ENCODE measurements at regions of chr16 and their contacts with region 1.

Region 1: DNA sequence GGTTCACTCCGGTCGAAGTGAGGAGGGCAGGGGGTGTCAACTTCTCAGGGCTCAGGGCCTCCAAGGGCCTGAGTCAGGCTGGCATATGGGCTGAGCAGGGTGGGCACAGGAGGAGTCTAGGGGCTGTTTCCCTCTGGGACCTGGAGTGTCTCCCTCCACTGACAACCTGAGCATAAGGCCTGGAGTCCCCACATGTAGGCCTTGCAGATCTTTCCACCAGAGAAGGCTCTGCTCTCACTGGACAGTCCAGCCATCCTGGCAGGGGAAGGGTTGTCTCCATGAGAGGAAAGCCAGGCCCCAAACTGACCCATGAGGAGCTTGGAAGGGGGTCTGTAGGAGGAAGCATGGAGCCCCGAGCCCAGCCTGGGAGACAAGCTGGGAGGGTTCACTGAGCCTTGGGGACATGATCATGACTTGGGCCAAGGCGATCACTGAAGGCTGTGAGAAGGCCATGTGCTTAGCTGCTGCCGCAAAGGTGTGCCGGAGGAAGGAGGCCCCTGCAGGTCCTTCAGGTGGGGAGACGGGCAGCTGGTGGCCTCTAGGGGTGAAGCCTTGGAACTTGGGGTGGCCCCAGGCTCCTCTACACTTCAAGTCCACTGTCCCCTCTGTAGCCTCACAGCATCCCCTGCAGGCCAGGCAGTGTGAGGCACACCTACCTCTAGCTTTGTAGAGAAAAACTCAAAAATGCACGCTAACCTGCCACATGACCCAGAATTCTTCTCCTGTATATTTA is 9.9 kb downstream of the CMTM2 start:
- DNase-seq: peak; percentile 84
- H3K4me3 Mint-ChIP-seq: peak overlapping the region; percentile 64
- H3K27ac Mint-ChIP-seq: peak overlapping the region; percentile 39
- H3K4me1 Mint-ChIP-seq: peaks cover 23% of the 10 kb centered on the region
- H3K27me3 Mint-ChIP-seq: no peaks in the 10 kb centered on the region

Region 2: GRCh38 chr16:66474750-66475199 is 114.4 kb before region 1 on chr16:
- CTCF ChIA-PET with region 1: interaction called, 24 read pairs
- POLR2A ChIA-PET with region 1: no interaction called
- intact Hi-C with region 1: loop called (anchors 1 kb)
- DNase-seq: peak; percentile 77
- H3K4me3 Mint-ChIP-seq: no peak overlapping the region
- H3K27ac Mint-ChIP-seq: peak overlapping the region; percentile 63
- H3K4me1 Mint-ChIP-seq: peaks cover 22% of the 10 kb centered on the region
- H3K27me3 Mint-ChIP-seq: no peaks in the 10 kb centered on the region

Region 3: GRCh38 chr16:66483689-66484481 is 105.3 kb before region 1 on chr16:
- CTCF ChIA-PET with region 1: interaction called, 20 read pairs
- POLR2A ChIA-PET with region 1: no interaction called
- intact Hi-C with region 1: loop called (anchors 1 kb)
- DNase-seq: peak; percentile 85
- H3K4me3 Mint-ChIP-seq: no peak overlapping the region
- H3K27ac Mint-ChIP-seq: peak overlapping the region; percentile 79
- H3K4me1 Mint-ChIP-seq: peaks cover 19% of the 10 kb centered on the region
- H3K27me3 Mint-ChIP-seq: no peaks in the 10 kb centered on the region

Region 4: GRCh38 chr16:66511615-66512500 is 77.3 kb before region 1 on chr16:
- CTCF ChIA-PET with region 1: interaction called, 15 read pairs
- POLR2A ChIA-PET with region 1: no interaction called
- intact Hi-C with region 1: loop called (anchors 2 kb)
- DNase-seq: no peak
- H3K4me3 Mint-ChIP-seq: no peak overlapping the region
- H3K27ac Mint-ChIP-seq: no peak overlapping the region
- H3K4me1 Mint-ChIP-seq: peaks cover 28% of the 10 kb centered on the region
- H3K27me3 Mint-ChIP-seq: no peaks in the 10 kb centered on the region

Region 5: GRCh38 chr16:66516808-66517585 is 72.2 kb before region 1 on chr16:
- CTCF ChIA-PET with region 1: interaction called, 15 read pairs
- POLR2A ChIA-PET with region 1: no interaction called
- intact Hi-C with region 1: loop called (anchors 2 kb)
- DNase-seq: peak; percentile 95
- H3K4me3 Mint-ChIP-seq: peak overlapping the region; percentile 87
- H3K27ac Mint-ChIP-seq: peak overlapping the region; percentile 99
- H3K4me1 Mint-ChIP-seq: peaks cover 71% of the 10 kb centered on the region
- H3K27me3 Mint-ChIP-seq: no peaks in the 10 kb centered on the region

Region 6: DNA sequence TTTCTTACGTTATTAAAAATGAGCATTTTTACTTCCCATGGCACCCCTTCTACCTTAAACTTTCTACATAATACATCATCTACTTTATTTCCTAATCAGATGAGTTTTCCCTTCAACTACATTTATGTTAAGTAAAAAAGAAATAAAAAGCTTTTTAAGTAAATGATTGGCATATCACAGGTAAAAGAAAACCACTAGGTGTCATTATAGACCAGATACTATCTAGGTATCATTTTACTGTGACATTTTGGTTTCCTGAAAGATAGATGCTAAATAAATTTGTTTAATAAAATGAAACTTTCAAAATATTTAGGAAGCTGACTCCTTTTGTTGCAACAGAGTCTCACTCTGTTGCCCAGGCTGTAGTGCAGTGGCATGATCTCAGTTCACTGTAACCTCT is 26.7 kb before region 1 on chr16:
- CTCF ChIA-PET with region 1: interaction called, 16 read pairs
- POLR2A ChIA-PET with region 1: no interaction called
- intact Hi-C with region 1: loop called (anchors 1 kb)
- DNase-seq: no peak
- H3K4me3 Mint-ChIP-seq: no peak overlapping the region
- H3K27ac Mint-ChIP-seq: no peak overlapping the region
- H3K4me1 Mint-ChIP-seq: peaks cover 71% of the 10 kb centered on the region
- H3K27me3 Mint-ChIP-seq: no peaks in the 10 kb centered on the region

Region 7: DNA sequence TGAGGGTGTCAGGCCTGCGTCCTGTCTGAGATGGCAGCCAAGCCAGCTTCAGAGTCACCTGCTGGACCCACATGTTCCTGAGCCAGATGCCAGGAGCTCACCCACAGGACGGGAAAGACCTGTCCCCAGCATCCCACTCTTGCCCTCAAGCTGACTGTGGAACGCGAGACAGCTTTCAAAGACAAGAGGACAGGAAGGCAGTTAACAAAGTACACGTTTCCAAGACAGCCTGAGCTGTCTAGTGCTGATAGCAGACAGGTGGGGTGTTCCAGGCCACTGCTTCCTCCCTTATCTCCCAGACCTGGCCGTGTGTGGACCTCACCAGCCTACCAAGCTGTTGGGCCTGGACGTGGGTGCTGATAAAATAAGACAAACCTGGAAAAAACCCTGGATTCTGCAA is 28.6 kb after region 1 on chr16:
- CTCF ChIA-PET with region 1: no interaction called
- POLR2A ChIA-PET with region 1: no interaction called
- intact Hi-C with region 1: no loop called
- DNase-seq: no peak
- H3K4me3 Mint-ChIP-seq: no peak overlapping the region
- H3K27ac Mint-ChIP-seq: no peak overlapping the region
- H3K4me1 Mint-ChIP-seq: peaks cover 2% of the 10 kb centered on the region
- H3K27me3 Mint-ChIP-seq: no peaks in the 10 kb centered on the region

Region 8: DNA sequence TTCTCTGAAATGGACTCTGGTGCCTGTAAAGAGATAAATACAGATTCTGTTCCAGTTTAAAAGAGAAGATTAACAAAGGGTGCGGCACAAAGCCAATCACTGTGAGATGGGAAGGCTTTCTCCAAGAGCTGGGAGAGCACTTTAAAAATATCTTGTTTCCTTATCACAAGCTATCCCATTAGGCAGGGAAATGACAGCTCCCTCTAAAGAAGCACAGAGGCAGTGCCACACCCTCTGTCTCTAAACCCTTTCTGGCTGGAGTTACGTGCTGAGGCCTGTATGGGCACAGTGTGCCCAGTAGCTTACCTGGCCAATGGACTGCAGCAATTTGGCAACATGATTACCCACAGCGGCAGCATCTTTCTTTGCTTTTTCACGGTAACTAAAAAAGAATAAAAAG is 221.2 kb after region 1 on chr16:
- CTCF ChIA-PET with region 1: no interaction called
- POLR2A ChIA-PET with region 1: no interaction called
- intact Hi-C with region 1: no loop called
- DNase-seq: no peak
- H3K4me3 Mint-ChIP-seq: no peak overlapping the region
- H3K27ac Mint-ChIP-seq: no peak overlapping the region
- H3K4me1 Mint-ChIP-seq: no peaks in the 10 kb centered on the region
- H3K27me3 Mint-ChIP-seq: no peaks in the 10 kb centered on the region

Measured in activated CD4-positive, alpha-beta memory T cell treated with anti-CD3 and anti-CD28 coated beads for 36 hours (primary cell).